Activated CD8-positive, alpha-beta memory T cell treated with anti-CD3 and anti-CD28 coated beads, Interleukin-2, amount 10 ng/mL, durations not matched to agents 7 days and 5 days (primary cell): ENCODE measurements at regions of chr17 and their contacts with region 1.

Region 1: DNA sequence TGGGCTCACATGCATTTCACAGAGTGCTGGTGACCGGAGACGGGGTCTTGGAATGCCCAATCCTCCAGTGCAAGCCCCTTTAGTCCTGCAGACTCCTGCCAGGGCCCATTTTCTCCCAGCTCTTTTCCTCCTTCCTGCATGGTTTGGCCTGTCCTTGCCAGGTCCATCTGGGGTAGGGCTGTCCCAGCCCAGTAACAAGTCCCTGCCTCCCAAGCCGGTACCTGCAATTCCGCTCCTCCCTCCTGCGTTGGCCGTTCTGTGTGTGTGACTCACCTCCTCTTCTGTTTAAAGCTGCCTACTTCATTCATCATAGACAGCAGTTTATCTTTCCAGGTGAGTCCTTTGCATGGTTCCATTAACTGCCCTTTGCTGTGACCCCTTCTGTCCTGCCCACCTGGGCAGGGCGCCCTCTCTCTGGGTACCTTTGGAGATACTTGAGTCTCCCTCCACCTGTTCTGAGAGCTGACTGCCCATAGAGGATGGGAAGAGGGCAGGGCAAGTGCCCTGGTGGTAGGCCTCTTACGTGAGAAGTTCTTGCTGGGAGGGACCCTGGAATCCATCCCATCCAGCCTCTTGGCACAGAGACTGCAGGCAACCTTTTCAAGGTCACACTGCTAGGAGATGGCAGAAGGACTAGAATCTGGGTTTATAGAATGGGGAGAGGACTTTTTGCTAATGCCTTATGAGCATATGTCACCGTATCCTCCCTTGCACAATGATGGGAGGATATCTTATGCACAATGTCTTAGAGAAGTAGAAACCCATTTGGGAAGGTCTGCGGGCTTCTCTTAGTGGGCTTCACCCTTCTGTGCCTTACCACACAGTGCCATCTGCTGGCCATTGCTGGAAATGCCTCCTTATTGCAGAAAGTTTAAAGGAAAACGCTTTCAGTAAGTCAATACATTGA is 29.7 kb upstream of the LGALS9 start:
- DNase-seq: peak; percentile 87
- ATAC-seq: peak; percentile 43
- H3K4me3 Mint-ChIP-seq: no peak overlapping the region
- H3K27ac Mint-ChIP-seq: no peak overlapping the region
- H3K4me1 Mint-ChIP-seq: peaks cover 19% of the 10 kb centered on the region
- H3K27me3 Mint-ChIP-seq: no peaks in the 10 kb centered on the region

Region 2: DNA sequence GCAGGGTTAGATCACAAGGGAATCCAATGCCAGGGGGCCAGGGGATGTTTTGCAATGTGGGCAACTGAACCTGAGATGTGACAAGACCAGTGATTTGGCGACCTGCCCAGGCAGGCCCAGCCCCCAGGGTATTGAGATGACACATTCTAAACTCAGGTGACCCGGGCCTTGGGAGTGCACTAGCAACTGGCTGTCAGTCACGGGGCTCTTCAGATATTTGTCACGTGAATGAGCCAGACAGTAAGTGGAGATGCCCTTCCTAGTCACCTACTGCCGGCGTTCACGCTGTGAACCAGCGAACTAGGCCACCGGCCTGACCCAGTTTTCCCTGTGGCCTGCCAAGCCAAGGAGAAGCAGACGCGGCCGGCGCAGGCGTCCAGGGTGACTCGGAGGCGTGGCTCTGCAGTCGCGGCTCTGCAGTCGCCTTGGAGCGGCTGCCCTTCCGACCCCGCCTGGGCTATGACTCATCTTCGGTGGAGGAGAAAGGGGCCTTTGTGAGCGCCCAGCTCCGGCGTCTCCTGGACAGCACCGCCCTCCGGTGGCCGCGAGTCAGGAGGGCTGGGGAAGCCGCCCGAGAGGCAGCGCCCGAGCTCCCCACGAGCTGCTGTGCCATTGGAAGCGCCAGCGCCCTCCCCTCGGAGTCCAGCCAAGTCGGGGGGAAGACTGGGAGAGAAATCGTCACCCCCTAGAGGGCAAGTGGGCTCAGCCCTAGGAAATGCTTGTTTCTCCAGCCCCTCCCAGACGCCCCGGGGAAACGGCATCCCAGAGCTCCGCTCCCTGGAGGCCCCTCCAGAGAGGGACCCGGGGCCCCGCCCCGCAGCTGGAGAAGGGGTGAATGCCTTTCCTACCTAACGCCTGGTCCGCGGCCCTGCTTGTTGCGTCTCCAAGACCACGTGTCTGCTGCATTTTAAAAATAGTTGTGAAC is 268.6 kb before region 1 on chr17:
- CTCF ChIA-PET with region 1: interaction called, 41 read pairs
- DNase-seq: peak; percentile 95
- ATAC-seq: peak; percentile 96
- H3K4me3 Mint-ChIP-seq: peak overlapping the region; percentile 76
- H3K27ac Mint-ChIP-seq: peak overlapping the region; percentile 79
- H3K4me1 Mint-ChIP-seq: peaks cover 28% of the 10 kb centered on the region
- H3K27me3 Mint-ChIP-seq: no peaks in the 10 kb centered on the region

Region 3: GRCh38 chr17:27381007-27381501 is 220.3 kb before region 1 on chr17:
- CTCF ChIA-PET with region 1: interaction called, 105 read pairs
- DNase-seq: peak; percentile 83
- ATAC-seq: peak; percentile 91
- H3K4me3 Mint-ChIP-seq: no peak overlapping the region
- H3K27ac Mint-ChIP-seq: no peak overlapping the region
- H3K4me1 Mint-ChIP-seq: peaks cover 11% of the 10 kb centered on the region
- H3K27me3 Mint-ChIP-seq: peaks cover 30% of the 10 kb centered on the region

Region 4: GRCh38 chr17:27473748-27474609 is 127.3 kb before region 1 on chr17:
- CTCF ChIA-PET with region 1: interaction called, 33 read pairs
- DNase-seq: peak; percentile 92
- ATAC-seq: peak; percentile 37
- H3K4me3 Mint-ChIP-seq: peak overlapping the region; percentile 68
- H3K27ac Mint-ChIP-seq: peak overlapping the region; percentile 91
- H3K4me1 Mint-ChIP-seq: peaks cover 92% of the 10 kb centered on the region
- H3K27me3 Mint-ChIP-seq: no peaks in the 10 kb centered on the region

Region 5: DNA sequence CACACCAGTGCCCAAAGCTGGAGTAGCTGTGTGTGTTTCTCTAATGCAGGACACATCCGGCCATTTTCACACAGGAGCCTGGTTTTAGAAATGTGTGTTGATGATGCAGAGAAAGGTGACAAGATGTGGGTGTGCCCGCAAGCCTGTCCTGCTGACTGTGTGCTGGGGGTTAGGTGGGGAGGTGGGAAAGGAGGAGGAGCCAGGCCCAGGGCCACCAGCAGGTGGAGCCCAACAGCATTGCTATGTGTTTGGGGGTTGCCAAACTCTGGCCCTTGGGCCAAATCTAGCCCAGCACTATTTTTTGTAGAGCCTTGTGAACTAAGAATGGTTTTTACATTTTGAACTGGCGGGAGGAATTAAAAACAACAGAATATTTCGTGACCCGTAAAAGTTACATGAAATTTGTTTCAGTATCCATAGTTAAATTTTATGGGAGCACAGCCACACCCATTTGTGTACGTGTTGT is 32.0 kb before region 1 on chr17:
- CTCF ChIA-PET with region 1: interaction called, 23 read pairs
- DNase-seq: peak; percentile 86
- ATAC-seq: peak; percentile 85
- H3K4me3 Mint-ChIP-seq: no peak overlapping the region
- H3K27ac Mint-ChIP-seq: peak overlapping the region; percentile 80
- H3K4me1 Mint-ChIP-seq: peaks cover 82% of the 10 kb centered on the region
- H3K27me3 Mint-ChIP-seq: no peaks in the 10 kb centered on the region

Region 6: DNA sequence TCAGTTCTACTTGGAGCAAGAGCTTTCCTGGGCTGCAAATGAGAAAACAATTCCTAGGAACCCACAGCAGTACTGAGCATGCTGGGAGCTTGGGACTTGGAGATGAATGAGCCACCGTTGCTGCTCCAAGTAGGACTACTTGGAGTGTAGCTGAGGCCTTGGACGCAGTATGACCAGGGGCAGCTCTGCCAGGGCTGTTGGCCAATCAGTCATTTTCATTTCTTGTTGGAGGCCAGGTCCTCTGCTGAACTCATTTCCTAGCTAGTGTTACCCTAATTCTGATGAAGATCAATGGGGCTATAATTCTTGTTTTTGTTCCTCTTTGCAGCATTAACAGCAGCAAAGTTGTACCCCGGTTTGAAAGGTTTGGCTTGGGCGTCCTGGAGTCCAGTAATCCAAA is 21.7 kb after region 1 on chr17:
- CTCF ChIA-PET with region 1: interaction called, 16 read pairs
- DNase-seq: no peak
- ATAC-seq: no peak
- H3K4me3 Mint-ChIP-seq: no peak overlapping the region
- H3K27ac Mint-ChIP-seq: no peak overlapping the region
- H3K4me1 Mint-ChIP-seq: peaks cover 24% of the 10 kb centered on the region
- H3K27me3 Mint-ChIP-seq: no peaks in the 10 kb centered on the region

Region 7: GRCh38 chr17:27654654-27655524 is 53.6 kb after region 1 on chr17:
- CTCF ChIA-PET with region 1: interaction called, 152 read pairs
- DNase-seq: peak; percentile 82
- ATAC-seq: peak; percentile 82
- H3K4me3 Mint-ChIP-seq: no peak overlapping the region
- H3K27ac Mint-ChIP-seq: no peak overlapping the region
- H3K4me1 Mint-ChIP-seq: peaks cover 6% of the 10 kb centered on the region
- H3K27me3 Mint-ChIP-seq: no peaks in the 10 kb centered on the region